Activated CD4-positive, alpha-beta T cell treated with anti-CD3 and anti-CD28 coated beads for 36 hours (primary cell): ENCODE measurements at regions of chr6 and their contacts with region 1.

Region 1: GRCh38 chr6:75208298-75209183 is 2.7 kb upstream of the COL12A1 start:
- DNase-seq: peak; percentile 90
- ATAC-seq: peak; percentile 85
- H3K4me3 Mint-ChIP-seq: peak overlapping the region; percentile 37
- H3K27ac Mint-ChIP-seq: no peak overlapping the region
- H3K4me1 Mint-ChIP-seq: peaks cover 51% of the 10 kb centered on the region
- H3K27me3 Mint-ChIP-seq: peaks cover 72% of the 10 kb centered on the region

Region 2: GRCh38 chr6:73732845-73733675 is 1475.5 kb before region 1 on chr6:
- CTCF ChIA-PET with region 1: interaction called, 72 read pairs
- POLR2A ChIA-PET with region 1: no interaction called
- intact Hi-C with region 1: no loop called
- DNase-seq: peak; percentile 85
- ATAC-seq: peak; percentile 81
- H3K4me3 Mint-ChIP-seq: no peak overlapping the region
- H3K27ac Mint-ChIP-seq: no peak overlapping the region
- H3K4me1 Mint-ChIP-seq: peaks cover 14% of the 10 kb centered on the region
- H3K27me3 Mint-ChIP-seq: no peaks in the 10 kb centered on the region

Region 3: DNA sequence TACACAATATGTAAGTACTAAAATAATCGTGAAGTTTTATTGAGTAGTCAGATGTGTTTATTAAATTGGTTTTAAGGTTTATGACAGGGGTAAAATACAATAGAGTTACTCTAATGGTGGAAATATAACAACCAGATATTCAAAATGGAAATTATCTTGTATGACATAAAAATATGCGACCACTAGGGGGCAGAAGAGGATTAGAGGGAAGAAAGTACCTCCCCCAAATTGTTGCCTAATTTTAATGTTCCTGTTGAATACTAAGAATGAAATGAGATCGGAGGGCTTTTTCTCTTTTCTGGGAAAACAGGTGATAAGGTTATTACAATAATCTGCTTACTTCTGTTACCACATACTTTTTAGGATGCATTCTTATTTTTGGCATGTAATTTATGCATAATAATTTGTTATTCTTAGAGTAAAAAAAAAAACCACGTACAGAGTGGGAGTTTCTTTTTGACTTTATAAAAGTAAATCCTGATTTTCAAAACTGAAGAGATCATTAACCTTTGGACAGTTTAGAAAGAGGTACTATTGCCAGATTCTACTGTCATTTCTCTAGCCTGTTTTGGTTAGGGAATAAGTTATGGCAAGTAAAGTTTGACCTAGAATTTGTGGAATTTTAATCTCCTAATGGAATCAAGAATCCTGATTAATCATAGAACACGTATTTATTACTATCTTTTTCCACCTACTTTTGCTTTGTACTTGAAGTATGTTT is 1353.4 kb before region 1 on chr6:
- CTCF ChIA-PET with region 1: interaction called, 29 read pairs
- POLR2A ChIA-PET with region 1: no interaction called
- intact Hi-C with region 1: loop called (anchors 1 to 5 kb)
- DNase-seq: no peak
- ATAC-seq: peak; percentile 26
- H3K4me3 Mint-ChIP-seq: no peak overlapping the region
- H3K27ac Mint-ChIP-seq: no peak overlapping the region
- H3K4me1 Mint-ChIP-seq: no peaks in the 10 kb centered on the region
- H3K27me3 Mint-ChIP-seq: no peaks in the 10 kb centered on the region

Region 4: GRCh38 chr6:74091136-74091793 is 1117.3 kb before region 1 on chr6:
- CTCF ChIA-PET with region 1: interaction called, 46 read pairs
- POLR2A ChIA-PET with region 1: no interaction called
- intact Hi-C with region 1: loop called (anchors 1 to 2 kb)
- DNase-seq: no peak
- ATAC-seq: peak; percentile 39
- H3K4me3 Mint-ChIP-seq: no peak overlapping the region
- H3K27ac Mint-ChIP-seq: no peak overlapping the region
- H3K4me1 Mint-ChIP-seq: no peaks in the 10 kb centered on the region
- H3K27me3 Mint-ChIP-seq: peaks cover 2% of the 10 kb centered on the region

Region 5: GRCh38 chr6:74574794-74575193 is 633.7 kb before region 1 on chr6:
- CTCF ChIA-PET with region 1: no interaction called
- POLR2A ChIA-PET with region 1: no interaction called
- intact Hi-C with region 1: loop called in 1 of 2 experiments (anchors 10 kb)
- DNase-seq: no peak
- ATAC-seq: no peak
- H3K4me3 Mint-ChIP-seq: no peak overlapping the region
- H3K27ac Mint-ChIP-seq: no peak overlapping the region
- H3K4me1 Mint-ChIP-seq: no peaks in the 10 kb centered on the region
- H3K27me3 Mint-ChIP-seq: no peaks in the 10 kb centered on the region

Region 6: DNA sequence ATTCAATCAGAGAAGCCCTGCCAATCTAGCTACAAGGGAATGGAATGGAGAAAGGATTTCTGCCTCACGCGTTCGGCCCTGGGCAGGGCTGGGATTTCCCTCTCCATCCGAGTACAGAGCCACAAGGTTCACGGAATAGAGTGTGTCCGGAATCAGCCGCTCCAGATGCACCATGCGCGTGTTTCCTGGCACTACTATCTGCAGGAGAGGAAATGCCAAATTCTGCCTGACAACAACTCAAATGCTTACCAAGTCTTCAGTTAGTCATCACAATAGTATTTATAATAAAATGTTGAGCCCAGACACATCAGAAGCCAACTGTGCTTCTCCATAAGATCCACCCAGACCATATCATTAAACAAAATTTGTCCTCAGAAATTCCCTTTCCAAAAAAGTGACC is 77.8 kb before region 1 on chr6:
- CTCF ChIA-PET with region 1: no interaction called
- POLR2A ChIA-PET with region 1: no interaction called
- intact Hi-C with region 1: no loop called
- DNase-seq: no peak
- ATAC-seq: no peak
- H3K4me3 Mint-ChIP-seq: no peak overlapping the region
- H3K27ac Mint-ChIP-seq: no peak overlapping the region
- H3K4me1 Mint-ChIP-seq: no peaks in the 10 kb centered on the region
- H3K27me3 Mint-ChIP-seq: peaks cover 2% of the 10 kb centered on the region

Region 7: DNA sequence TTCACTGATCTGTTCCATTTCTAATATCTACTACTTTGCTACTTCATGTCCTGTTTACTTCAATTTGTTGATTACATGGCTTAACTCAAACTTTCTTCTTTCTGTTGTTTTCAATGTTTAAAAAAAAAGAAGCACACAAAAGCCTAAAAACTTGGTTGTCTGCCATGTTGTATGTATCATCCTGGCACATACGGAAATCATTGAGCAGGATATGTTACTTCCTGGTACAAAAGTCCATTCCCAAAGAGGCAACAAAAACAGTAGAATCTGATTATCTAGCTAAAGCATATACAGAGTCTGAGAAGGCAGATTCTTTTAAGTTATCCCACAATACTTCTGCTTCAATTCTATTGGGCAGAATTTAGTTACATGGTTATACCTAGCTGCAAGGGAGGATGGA is 11.8 kb after region 1 on chr6:
- CTCF ChIA-PET with region 1: interaction called, 24 read pairs
- POLR2A ChIA-PET with region 1: no interaction called
- intact Hi-C with region 1: no loop called
- DNase-seq: no peak
- ATAC-seq: no peak
- H3K4me3 Mint-ChIP-seq: no peak overlapping the region
- H3K27ac Mint-ChIP-seq: no peak overlapping the region
- H3K4me1 Mint-ChIP-seq: peaks cover 7% of the 10 kb centered on the region
- H3K27me3 Mint-ChIP-seq: peaks cover 29% of the 10 kb centered on the region

Region 8: DNA sequence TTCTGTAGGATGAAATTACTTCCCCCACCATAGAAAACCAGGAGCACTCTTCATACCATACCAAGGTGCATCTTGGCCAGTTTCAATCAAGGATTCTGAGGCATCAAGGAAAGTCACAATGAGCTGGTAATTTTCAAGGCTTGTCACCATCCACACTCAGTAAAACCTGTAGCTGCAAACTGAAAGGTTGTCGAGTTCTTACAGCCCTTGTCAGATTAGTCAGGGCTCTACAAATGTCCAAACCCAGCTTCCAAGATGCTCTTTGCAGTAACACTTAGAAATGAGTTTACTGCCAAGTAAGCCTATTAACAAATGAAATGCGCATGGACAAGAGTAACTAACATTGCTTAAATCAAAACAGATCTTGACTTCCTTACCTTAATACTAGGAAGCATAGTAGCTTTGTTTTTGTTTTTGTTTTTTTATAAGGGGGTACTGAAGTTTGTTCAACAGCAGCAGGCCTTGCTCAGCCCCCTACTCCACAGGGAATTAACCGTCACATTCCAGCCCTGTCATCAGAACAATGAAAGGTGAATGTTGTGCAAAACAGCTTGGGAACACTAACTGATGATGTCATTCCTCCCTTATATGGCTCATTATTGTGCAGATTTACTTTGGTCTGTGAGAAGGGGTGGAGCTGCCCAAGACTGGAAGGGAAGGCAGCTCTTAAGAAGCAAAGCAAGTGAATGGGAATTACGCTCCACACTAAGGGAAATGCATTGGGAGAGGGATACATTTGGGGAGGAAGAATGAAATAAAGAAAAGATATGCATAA is 125.9 kb after region 1 on chr6:
- CTCF ChIA-PET with region 1: no interaction called
- POLR2A ChIA-PET with region 1: no interaction called
- intact Hi-C with region 1: no loop called
- DNase-seq: no peak
- ATAC-seq: no peak
- H3K4me3 Mint-ChIP-seq: no peak overlapping the region
- H3K27ac Mint-ChIP-seq: no peak overlapping the region
- H3K4me1 Mint-ChIP-seq: no peaks in the 10 kb centered on the region
- H3K27me3 Mint-ChIP-seq: peaks cover 2% of the 10 kb centered on the region

Region 9: DNA sequence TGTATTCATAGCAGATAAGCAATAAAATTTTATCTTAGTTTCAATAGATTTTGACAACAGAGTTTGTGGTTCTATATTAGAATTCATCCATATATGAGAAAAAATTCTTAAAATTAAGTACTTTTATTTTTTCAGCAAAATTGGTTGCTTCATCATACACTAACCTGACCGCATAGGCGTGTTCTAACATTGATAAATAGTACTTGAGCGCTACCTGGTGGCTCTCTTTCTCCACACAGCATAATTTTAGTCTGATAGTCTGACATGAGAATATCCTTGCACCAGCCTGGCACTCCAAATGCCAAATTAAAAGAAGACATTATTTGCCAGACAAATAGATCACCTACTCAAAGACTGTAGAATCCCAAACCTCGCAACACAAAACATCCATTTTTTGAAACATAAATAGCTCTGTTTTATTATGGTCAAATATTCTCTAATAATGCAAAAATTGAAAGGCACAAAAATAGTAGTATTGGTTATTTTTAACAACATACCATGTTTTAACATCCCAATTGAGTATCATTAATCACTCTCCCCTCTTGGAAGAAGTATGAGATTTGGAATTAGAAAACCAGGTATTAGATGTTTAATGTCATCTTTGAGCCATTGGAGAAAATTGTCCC is 318.1 kb after region 1 on chr6:
- CTCF ChIA-PET with region 1: no interaction called
- POLR2A ChIA-PET with region 1: no interaction called
- intact Hi-C with region 1: loop called (anchors 2 kb)
- DNase-seq: peak; percentile 68
- ATAC-seq: peak; percentile 76
- H3K4me3 Mint-ChIP-seq: no peak overlapping the region
- H3K27ac Mint-ChIP-seq: no peak overlapping the region
- H3K4me1 Mint-ChIP-seq: no peaks in the 10 kb centered on the region
- H3K27me3 Mint-ChIP-seq: peaks cover 16% of the 10 kb centered on the region

Region 10: DNA sequence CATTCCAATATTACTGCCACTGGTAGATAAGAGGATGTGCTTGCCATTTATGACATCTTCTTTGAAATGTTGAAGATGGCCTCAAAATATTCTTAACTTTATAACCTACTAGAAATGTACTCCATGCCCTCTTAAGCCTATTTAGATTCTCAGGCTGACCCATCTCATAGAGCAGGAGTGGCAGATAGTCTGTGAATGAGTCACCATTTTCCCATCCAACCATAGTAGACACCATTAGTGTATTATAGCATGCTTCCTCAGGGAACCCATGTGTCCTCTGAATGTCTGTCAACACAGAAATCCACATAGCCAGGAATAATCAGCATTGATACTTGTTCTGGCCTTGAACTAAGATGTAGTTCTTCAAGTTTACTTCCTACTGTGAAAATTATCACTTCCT is 713.7 kb after region 1 on chr6:
- CTCF ChIA-PET with region 1: no interaction called
- POLR2A ChIA-PET with region 1: no interaction called
- intact Hi-C with region 1: no loop called
- DNase-seq: no peak
- ATAC-seq: no peak
- H3K4me3 Mint-ChIP-seq: no peak overlapping the region
- H3K27ac Mint-ChIP-seq: no peak overlapping the region
- H3K4me1 Mint-ChIP-seq: no peaks in the 10 kb centered on the region
- H3K27me3 Mint-ChIP-seq: peaks cover 5% of the 10 kb centered on the region